Activated B cell treated with CpG ODN at 0.5 μM for 24 hours (primary cell): ENCODE measurements at regions of chr22 and their contacts with region 1.

Region 1: GRCh38 chr22:28800308-28801077 is at the start of gene XBP1:
- DNase-seq: peak; percentile 85
- ATAC-seq: peak; percentile 93
- H3K4me3 Mint-ChIP-seq: peak within 1 kb of the TSS; percentile 98
- H3K27ac Mint-ChIP-seq: peak within 1 kb of the TSS; percentile 98
- H3K4me1 Mint-ChIP-seq: peaks cover 56% of the 10 kb centered on the region
- H3K27me3 Mint-ChIP-seq: no peaks in the 10 kb centered on the region
- CTCF ChIP-seq: no peak
- total RNA-seq, gene XBP1: 57.7 and 67.3 TPM in 2 replicates

Region 2: DNA sequence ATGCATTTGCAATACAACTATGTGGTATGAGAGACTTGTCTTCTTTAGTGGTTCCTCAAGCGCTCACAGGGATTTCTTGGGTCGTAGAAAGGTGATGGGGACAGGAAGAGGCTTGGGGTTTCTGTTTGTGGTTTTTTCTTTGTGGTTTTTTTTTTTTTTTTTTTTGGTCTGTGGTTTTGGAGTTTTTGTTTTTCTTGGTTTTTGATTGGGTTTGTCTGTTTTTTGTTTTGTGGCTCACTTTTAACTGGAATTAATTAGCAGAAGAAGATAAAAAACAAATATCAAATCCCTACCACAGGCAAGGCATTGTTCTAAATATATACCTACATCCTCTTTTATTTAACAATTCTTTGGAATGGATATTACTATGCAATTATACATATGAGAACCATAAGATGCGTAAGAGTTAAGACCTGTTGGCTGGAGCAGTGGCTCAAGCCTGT is 126.4 kb before region 1 on chr22:
- CTCF ChIA-PET with region 1: no interaction called
- POLR2A ChIA-PET with region 1: no interaction called
- intact Hi-C with region 1: loop called (anchors 5 kb)
- DNase-seq: no peak
- ATAC-seq: peak; percentile 71
- H3K4me3 Mint-ChIP-seq: peak overlapping the region; percentile 68
- H3K27ac Mint-ChIP-seq: peak overlapping the region; percentile 91
- H3K4me1 Mint-ChIP-seq: peaks cover 30% of the 10 kb centered on the region
- H3K27me3 Mint-ChIP-seq: peaks cover 28% of the 10 kb centered on the region
- CTCF ChIP-seq: no peak

Region 3: DNA sequence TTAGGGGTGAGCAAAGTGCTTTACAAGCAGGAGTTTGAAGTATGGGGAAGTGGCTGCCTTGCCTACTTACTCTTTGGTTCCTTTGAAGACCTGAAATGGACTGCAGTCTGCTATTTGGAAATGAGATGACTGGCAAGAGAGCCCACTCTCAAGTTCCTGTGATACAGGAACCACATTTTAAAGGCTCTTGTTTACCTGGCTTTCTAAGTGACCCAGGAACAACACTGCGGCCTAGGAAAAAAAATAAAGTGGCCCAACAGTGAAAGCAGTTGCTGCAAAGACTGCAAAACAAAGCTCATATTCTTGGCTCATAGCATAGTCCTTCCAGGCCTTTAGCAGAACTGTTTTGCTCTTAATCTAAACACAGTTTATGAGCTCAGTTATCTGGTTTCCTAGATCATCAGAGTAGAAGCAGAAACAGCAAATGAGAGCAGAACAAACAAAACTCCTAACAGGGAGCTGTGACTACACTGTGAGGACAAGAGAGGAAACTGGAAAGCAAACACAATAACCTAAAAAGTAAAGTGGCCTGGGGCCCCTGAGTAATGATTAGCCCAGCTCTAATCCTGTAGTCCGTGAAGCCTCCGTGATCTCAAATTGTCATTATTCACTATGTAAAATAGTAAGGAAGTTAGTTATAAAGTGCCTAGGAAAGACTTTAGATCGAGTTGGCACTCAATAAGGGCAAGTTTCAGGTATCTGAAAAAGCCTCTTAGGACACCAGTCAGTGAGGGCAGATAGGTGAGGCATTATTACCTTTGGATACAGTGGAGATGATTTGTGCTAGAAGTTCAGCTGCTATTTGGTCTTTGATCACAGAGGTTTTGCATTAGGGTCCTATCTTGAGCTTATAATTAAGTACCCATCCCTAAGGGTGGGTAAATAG is 16.5 kb before region 1 on chr22:
- CTCF ChIA-PET with region 1: no interaction called
- POLR2A ChIA-PET with region 1: interaction called, 26 read pairs
- intact Hi-C with region 1: no loop called
- DNase-seq: no peak
- ATAC-seq: no peak
- H3K4me3 Mint-ChIP-seq: no peak overlapping the region
- H3K27ac Mint-ChIP-seq: no peak overlapping the region
- H3K4me1 Mint-ChIP-seq: peaks cover 9% of the 10 kb centered on the region
- H3K27me3 Mint-ChIP-seq: no peaks in the 10 kb centered on the region
- CTCF ChIP-seq: no peak

Region 4: GRCh38 chr22:28882878-28883656 is 82.6 kb after region 1 on chr22 and contains the start of gene ZNRF3:
- CTCF ChIA-PET with region 1: no interaction called
- POLR2A ChIA-PET with region 1: interaction called, 3 read pairs
- intact Hi-C with region 1: loop called (anchors 2 kb)
- DNase-seq: peak; percentile 84
- ATAC-seq: peak; percentile 94
- H3K4me3 Mint-ChIP-seq: peak within 1 kb of the TSS; percentile 86
- H3K27ac Mint-ChIP-seq: peak within 1 kb of the TSS; percentile 46
- H3K4me1 Mint-ChIP-seq: peaks cover 26% of the 10 kb centered on the region
- H3K27me3 Mint-ChIP-seq: peaks cover 17% of the 10 kb centered on the region
- CTCF ChIP-seq: no peak
- total RNA-seq, gene ZNRF3: 0.51 and 0.69 TPM in 2 replicates

Region 5: GRCh38 chr22:29617922-29618629 is 817.6 kb after region 1 on chr22:
- CTCF ChIA-PET with region 1: no interaction called
- POLR2A ChIA-PET with region 1: no interaction called
- intact Hi-C with region 1: no loop called
- DNase-seq: no peak
- ATAC-seq: no peak
- H3K4me3 Mint-ChIP-seq: no peak overlapping the region
- H3K27ac Mint-ChIP-seq: peak overlapping the region; percentile 3
- H3K4me1 Mint-ChIP-seq: peaks cover 52% of the 10 kb centered on the region
- H3K27me3 Mint-ChIP-seq: no peaks in the 10 kb centered on the region
- CTCF ChIP-seq: no peak